Activated CD8-positive, alpha-beta memory T cell treated with anti-CD3 and anti-CD28 coated beads, Interleukin-2, amount 10 ng/mL, durations not matched to agents 7 days and 5 days (primary cell): ENCODE measurements at regions of chr18 and their contacts with region 1.

Region 1: DNA sequence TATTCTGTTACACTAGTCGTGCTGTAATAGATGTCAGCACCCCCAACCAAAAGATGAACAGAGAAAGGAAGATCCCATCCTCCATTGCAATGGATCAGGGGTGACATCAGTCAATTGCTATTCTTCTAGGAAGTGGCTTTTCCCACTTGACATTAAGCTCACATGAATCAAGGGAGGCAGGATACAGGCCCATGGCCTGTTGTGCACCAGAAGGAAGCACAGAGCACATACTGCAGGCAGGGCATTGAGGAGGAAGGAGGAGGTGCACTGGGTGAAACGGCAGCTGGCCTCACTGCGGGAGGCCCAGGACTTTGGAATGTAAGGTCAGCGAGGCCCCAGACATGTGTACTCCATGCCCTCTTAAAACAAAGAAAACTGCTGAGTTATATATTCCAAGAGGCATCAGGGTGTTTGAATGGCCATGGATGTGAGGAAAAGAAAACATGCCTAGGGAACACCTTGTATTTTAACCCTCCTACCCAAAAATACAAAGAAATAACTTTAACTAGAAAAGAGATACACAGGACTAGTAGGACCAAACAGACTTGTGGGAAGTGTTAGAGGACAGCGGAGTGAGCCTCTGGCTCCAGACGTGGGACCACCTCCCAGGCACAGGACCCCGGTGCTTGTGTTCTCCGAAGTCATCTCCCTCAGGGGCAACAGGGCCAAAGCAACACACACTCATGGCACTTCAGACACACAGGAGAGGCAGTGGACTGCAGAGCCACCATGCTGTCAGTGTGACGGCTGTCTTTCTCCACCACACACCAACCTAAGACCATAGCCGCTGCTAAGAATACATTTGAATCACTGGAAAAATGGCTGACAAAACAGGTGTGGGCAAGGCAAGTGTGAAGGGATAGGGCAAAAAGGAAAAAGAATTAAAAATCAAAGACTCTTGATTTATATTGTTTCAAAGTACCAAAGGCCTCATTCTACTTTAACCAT is 51.4 kb upstream of the RIOK3 start:
- DNase-seq: no peak
- ATAC-seq: no peak
- H3K4me3 Mint-ChIP-seq: no peak overlapping the region
- H3K27ac Mint-ChIP-seq: no peak overlapping the region
- H3K4me1 Mint-ChIP-seq: peaks cover 10% of the 10 kb centered on the region
- H3K27me3 Mint-ChIP-seq: no peaks in the 10 kb centered on the region

Region 2: DNA sequence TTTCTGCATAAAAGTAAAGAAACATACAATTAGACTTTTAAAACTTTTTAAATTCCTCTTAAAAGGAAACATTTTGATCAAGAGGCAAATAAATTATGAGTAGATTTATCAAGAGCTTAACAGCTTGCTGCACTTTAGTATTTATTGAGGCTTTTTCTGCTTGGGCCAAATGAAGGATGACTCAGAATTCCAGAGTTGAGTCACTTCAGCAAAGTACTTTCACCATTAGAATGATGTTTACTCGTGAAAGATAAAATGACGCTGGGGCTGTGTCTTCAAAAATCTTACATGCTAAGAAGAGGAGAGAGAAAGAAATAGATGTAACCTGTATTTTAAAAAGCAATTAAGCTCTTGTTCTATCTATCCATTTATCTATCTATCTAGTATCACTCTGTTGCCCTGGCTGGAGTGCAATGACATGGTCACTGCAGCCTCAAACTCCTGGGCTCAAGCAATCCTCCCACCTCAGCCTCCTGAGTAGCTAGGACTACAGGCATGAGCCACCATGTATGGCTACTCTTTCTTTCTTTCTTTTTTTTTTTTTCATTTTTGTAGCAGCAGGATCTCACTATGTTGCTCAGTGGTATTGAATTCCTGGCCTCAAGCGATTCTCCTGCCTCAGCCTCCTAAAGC is 23.9 kb before region 1 on chr18:
- CTCF ChIA-PET with region 1: interaction called, 11 read pairs
- DNase-seq: no peak
- ATAC-seq: peak; percentile 85
- H3K4me3 Mint-ChIP-seq: no peak overlapping the region
- H3K27ac Mint-ChIP-seq: peak overlapping the region; percentile 13
- H3K4me1 Mint-ChIP-seq: peaks cover 18% of the 10 kb centered on the region
- H3K27me3 Mint-ChIP-seq: no peaks in the 10 kb centered on the region